Sigmoid colon (tissue), 7 donors: ENCODE measurements at regions of chr9 and their contacts with region 1.

Region 1: GRCh38 chr9:18689921-18690320 is 216.0 kb downstream of the ADAMTSL1 start:
- DNase-seq: no peak
- H3K4me3 ChIP-seq: no peak overlapping the region
- H3K27ac ChIP-seq: no peak overlapping the region
- H3K4me1 ChIP-seq: peaks cover 0 to 12% (median 4%) of the 10 kb centered on the region in 4 donors
- H3K27me3 ChIP-seq: no peaks in the 10 kb centered on the region
- CTCF ChIP-seq: no peak
- EP300 ChIP-seq: no peak
- POLR2A ChIP-seq: no peak

Region 2: DNA sequence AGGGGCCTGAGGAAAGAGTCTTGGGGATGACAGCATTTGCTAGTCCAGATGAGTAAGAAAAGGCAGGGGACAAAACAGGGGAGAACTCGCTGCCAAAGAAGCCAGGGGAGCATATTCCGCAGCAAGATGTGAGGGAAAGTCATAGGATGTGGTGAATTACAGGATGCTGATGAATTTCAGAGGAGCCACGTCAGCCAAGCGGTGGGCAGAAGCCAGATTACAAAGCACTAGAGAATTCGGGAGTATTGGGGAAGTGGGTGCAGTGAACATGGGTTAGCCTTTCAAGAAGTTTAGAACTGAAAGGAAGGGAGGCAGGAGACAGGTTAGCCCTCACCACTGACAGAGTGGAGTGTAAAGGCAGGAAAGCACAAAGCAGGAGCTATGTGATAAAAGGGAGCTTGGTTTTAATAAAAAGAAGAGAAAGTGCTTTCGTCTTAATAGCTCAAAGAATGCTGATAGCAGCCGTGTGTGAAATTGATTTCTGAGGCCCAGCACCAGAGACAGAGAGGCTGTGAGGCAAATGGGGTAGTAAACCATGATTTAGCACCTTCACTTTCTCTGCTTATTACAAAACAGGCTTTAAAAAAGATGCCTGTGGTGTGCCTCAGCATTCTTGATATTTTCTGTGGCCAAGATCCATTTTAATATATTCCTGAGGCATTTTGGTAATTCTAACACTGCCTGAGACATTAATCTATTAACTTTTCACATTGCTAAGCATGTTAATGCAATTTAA is 199.1 kb before region 1 on chr9:
- intact Hi-C with region 1: loop called (anchors 10 kb)
- DNase-seq: no peak
- H3K4me3 ChIP-seq: peak overlapping the region in 1 of 4 donors; percentile 9
- H3K27ac ChIP-seq: peak overlapping the region; percentile 16 to 70 (median 39)
- H3K4me1 ChIP-seq: peaks cover 0 to 20% (median 15%) of the 10 kb centered on the region in 4 donors
- H3K27me3 ChIP-seq: no peaks in the 10 kb centered on the region
- CTCF ChIP-seq: no peak
- EP300 ChIP-seq: no peak
- POLR2A ChIP-seq: no peak

Region 3: DNA sequence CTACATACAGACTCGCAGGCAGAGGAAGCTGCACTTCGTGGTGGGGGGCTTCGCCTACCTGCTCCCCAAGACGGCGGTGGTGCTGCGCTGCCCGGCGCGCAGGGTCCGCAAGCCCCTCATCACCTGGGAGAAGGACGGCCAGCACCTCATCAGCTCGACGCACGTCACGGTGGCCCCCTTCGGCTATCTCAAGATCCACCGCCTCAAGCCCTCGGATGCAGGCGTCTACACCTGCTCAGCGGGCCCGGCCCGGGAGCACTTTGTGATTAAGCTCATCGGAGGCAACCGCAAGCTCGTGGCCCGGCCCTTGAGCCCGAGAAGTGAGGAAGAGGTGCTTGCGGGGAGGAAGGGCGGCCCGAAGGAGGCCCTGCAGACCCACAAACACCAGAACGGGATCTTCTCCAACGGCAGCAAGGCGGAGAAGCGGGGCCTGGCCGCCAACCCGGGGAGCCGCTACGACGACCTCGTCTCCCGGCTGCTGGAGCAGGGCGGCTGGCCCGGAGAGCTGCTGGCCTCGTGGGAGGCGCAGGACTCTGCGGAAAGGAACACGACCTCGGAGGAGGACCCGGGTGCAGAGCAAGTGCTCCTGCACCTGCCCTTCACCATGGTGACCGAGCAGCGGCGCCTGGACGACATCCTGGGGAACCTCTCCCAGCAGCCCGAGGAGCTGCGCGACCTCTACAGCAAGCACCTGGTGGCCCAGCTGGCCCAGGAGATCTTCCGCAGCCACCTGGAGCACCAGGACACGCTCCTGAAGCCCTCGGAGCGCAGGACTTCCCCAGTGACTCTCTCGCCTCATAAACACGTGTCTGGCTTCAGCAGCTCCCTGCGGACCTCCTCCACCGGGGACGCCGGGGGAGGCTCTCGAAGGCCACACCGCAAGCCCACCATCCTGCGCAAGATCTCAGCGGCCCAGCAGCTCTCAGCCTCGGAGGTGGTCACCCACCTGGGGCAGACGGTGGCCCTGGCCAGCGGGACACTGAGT is 87.2 kb after region 1 on chr9:
- intact Hi-C with region 1: loop called (anchors 10 kb)
- DNase-seq: peak; percentile 64
- H3K4me3 ChIP-seq: no peak overlapping the region
- H3K27ac ChIP-seq: no peak overlapping the region
- H3K4me1 ChIP-seq: peaks cover 0 to 1% (median 0%) of the 10 kb centered on the region in 4 donors
- H3K27me3 ChIP-seq: no peaks in the 10 kb centered on the region
- CTCF ChIP-seq: no peak
- EP300 ChIP-seq: no peak
- POLR2A ChIP-seq: no peak